AG04450 (cell line): ENCODE measurements at regions of chr1 and their contacts with region 1.

Region 1: GRCh38 chr1:110495926-110496600 is 22.9 kb downstream of the KCNA10 start:
- DNase-seq: peak; percentile 63
- H3K4me3 ChIP-seq: no peak overlapping the region
- H3K27ac ChIP-seq: no peak overlapping the region
- H3K27me3 ChIP-seq: peaks cover 22% of the 10 kb centered on the region
- CTCF ChIP-seq: peak; percentile 99

Region 2: DNA sequence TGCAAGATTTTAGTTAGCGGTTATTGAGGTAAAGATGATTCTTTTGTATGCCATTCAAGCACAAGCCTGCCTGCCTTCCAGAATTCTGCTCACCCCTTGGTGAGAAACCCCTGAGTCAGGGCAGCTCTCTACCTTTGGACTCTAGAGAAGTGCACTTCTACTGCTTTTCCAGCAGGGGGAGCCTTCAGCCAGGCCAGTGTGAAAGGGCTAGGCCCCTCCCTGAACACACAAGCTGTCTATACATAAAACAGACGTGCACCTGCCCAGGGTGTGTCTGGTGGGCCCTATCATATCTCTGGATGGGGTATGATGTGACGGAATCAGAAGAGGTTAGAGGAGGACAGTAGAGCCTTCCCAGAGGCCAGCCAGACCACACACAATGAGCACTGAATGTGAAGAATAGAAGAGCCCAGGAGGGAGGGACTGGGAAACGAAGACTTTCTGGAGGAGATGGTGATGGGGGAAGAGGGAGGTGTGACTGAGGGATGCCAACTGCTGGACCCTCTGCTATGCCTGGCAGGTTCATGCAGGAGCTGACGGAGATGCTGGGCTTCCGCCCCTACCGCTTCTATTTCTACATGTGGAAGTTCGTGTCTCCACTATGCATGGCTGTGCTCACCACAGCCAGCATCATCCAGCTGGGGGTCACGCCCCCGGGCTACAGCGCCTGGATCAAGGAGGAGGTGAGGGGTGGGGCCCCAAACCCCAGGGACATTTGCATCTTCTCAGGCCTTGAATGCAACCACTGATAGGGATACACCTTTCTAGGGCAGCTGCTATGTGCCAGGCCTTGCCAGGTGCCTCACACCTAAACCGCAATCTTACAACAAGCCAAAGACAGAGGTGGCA is 298.9 kb before region 1 on chr1:
- CTCF ChIA-PET with region 1: interaction called, 134 read pairs
- POLR2A ChIA-PET with region 1: no interaction called
- DNase-seq: no peak
- H3K4me3 ChIP-seq: no peak overlapping the region
- H3K27ac ChIP-seq: no peak overlapping the region
- H3K27me3 ChIP-seq: peaks cover 3% of the 10 kb centered on the region
- CTCF ChIP-seq: peak; percentile 97

Region 3: GRCh38 chr1:110312188-110313121 is 183.6 kb before region 1 on chr1:
- CTCF ChIA-PET with region 1: interaction called, 27 read pairs
- POLR2A ChIA-PET with region 1: no interaction called
- DNase-seq: peak; percentile 51
- H3K4me3 ChIP-seq: no peak overlapping the region
- H3K27ac ChIP-seq: no peak overlapping the region
- H3K27me3 ChIP-seq: no peaks in the 10 kb centered on the region
- CTCF ChIP-seq: peak; percentile 99

Region 4: GRCh38 chr1:110407260-110408210 is 88.5 kb before region 1 on chr1 and contains the start of gene LAMTOR5:
- CTCF ChIA-PET with region 1: interaction called, 265 read pairs
- POLR2A ChIA-PET with region 1: no interaction called
- DNase-seq: peak; percentile 65
- H3K4me3 ChIP-seq: peak within 1 kb of the TSS; percentile 98
- H3K27ac ChIP-seq: peak within 1 kb of the TSS; percentile 93
- H3K27me3 ChIP-seq: no peaks in the 10 kb centered on the region
- CTCF ChIP-seq: no peak
- polyA plus RNA-seq, gene LAMTOR5: 288 and 300 TPM in 2 replicates

Region 5: DNA sequence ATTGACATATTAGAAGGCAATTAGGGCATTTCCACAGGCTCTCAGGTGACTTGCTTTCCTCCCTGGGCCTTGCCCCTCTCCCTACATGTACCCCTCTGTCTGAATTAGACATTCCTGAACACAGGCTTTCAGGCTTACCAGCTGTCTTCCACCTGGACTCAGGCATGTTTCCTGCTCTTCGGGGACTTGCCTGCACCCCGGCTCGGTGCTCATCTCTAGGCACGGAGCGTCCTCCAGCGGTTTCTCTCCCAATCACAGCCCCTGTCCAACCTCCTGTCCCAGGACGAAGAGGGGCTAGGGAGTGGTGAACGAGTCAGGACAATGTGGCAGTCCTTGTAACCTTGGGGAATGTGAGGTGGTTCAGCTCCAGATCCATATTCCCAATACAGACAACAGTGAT is 40.9 kb before region 1 on chr1:
- CTCF ChIA-PET with region 1: interaction called, 281 read pairs
- POLR2A ChIA-PET with region 1: no interaction called
- DNase-seq: no peak
- H3K4me3 ChIP-seq: no peak overlapping the region
- H3K27ac ChIP-seq: no peak overlapping the region
- H3K27me3 ChIP-seq: peaks cover 54% of the 10 kb centered on the region
- CTCF ChIP-seq: no peak

Region 6: DNA sequence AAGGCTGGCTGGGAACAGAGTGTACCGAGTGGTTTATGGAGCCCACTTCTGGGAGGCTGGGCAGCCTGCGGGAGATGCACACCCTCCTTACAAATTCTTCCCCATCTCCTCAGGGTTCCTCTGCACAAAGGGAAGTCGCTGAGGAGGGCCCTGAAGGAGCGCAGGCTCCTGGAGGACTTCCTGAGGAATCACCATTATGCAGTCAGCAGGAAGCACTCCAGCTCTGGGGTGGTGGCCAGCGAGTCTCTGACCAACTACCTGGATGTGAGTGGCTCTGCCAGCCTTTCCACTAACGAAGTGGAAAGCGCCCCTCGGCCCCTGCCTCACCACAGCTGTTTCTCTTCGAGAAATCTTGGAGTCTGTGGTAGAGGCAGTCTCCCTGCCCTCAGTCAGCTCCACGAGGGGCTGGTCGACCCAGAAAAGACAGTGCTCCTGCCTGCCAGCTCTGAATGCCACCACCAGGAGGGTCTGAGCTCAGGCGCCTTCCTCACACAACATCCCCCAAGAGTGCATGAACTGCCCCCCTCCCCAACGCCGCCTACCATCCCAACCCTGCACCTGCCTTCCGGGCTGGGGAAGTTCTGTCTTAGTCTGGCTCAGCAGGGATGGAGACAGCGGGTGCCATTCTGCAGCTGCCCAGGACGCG is 13.3 kb before region 1 on chr1:
- CTCF ChIA-PET with region 1: interaction called, 33 read pairs
- POLR2A ChIA-PET with region 1: no interaction called
- DNase-seq: no peak
- H3K4me3 ChIP-seq: no peak overlapping the region
- H3K27ac ChIP-seq: no peak overlapping the region
- H3K27me3 ChIP-seq: peaks cover 21% of the 10 kb centered on the region
- CTCF ChIP-seq: no peak